Naive thymus-derived CD8-positive, alpha-beta T cell (primary cell): ENCODE measurements at regions of chr3 and their contacts with region 1.

Region 1: DNA sequence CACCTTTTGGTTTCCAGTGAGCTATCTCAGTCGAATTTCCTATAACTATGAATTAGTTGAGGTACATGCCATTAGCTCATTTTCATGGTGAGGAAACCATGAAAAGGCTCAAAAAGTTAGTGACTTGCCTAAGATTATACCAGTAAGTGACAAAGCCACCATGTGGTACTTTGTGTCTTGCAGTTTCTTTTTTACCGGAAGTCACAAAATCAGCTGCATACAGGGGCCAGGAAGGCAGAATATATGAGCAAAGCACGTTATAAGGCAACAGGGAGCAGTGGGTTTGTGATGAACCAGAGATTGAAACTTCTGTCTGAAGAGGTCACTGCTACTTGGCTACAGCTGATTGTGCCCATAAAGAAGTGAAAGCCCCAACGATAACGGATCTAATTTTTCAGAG is 50.3 kb downstream of the CMTM8 start:
- DNase-seq: peak in 4 of 10 donors; percentile 19 to 53 (median 40)
- ATAC-seq: peak; percentile 85 to 89
- H3K4me3 Mint-ChIP-seq: peak overlapping the region in 9 of 10 donors; percentile 17 to 79 (median 38)
- H3K27ac Mint-ChIP-seq: peak overlapping the region; percentile 63 to 96 (median 92)
- H3K4me1 Mint-ChIP-seq: peaks cover 7 to 35% (median 34%) of the 10 kb centered on the region in 4 donors
- H3K27me3 Mint-ChIP-seq: no peaks in the 10 kb centered on the region

Region 2: GRCh38 chr3:32238453-32239306 is 50.1 kb before region 1 on chr3 and contains the start of gene CMTM8:
- POLR2A ChIA-PET with region 1: interaction called, 10 read pairs
- DNase-seq: peak; percentile 40 to 77 (median 58)
- ATAC-seq: peak; percentile 79 to 81
- H3K4me3 Mint-ChIP-seq: peak within 1 kb of the TSS; percentile 82 to 90 (median 86)
- H3K27ac Mint-ChIP-seq: peak within 1 kb of the TSS in 9 of 10 donors; percentile 47 to 88 (median 76)
- H3K4me1 Mint-ChIP-seq: peaks cover 25 to 65% (median 29%) of the 10 kb centered on the region in 4 donors
- H3K27me3 Mint-ChIP-seq: no peaks in the 10 kb centered on the region
- polyA plus RNA-seq, gene CMTM8: 2.8 to 8.6 (median 3.8) TPM